ENCODE measurements at regions of chr14 and their contacts with region 1.

Region 1: GRCh38 chr14:50321009-50321660 is 9.0 kb downstream of the DMAC2L start:
- DNase-seq: peak; percentile 79
- H3K4me3 Mint-ChIP-seq: no peak overlapping the region
- H3K27ac Mint-ChIP-seq: no peak overlapping the region
- H3K4me1 Mint-ChIP-seq: peaks cover 22% of the 10 kb centered on the region
- H3K27me3 Mint-ChIP-seq: no peaks in the 10 kb centered on the region

Region 2: DNA sequence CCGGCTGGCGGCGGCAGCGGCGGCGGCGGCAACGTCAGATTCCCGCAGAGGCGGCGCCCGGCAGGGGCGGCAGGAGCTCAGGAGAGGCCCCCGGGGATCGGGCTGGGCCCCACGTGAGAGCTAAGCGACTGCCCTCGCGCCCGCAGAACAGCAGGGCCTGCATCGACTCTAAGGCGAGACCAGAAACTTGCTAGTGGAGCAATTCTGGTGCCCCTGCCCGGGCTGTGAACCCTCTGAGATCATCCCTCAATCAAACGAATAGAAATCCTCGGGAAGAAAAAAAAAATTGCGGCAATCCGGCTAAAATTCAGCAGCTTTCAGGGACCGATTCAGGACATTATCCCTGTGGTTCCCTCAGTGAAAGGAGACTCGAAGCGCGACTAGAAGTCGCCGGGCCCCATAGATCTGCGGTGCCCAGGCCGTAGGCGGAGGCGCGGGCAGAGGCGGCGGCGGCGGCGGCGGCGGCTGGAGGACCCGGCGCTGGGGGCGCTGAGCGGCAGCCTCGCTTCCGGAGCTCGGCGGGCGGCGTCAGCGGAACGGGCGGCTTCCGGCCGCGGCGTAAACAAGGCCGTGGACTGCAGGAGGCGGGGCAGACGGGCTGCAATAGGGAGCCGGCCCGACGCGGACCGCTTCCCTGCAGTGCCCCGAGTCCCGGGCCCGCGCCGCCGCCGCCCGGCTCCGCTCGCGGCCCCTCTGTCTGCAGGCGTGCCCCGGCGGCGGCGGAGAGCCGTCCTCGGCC is 553.4 kb before region 1 on chr14 and contains the start of gene KLHDC2:
- CTCF ChIA-PET with region 1: interaction called, 3 read pairs
- POLR2A ChIA-PET with region 1: no interaction called
- intact Hi-C with region 1: loop called (anchors 10 kb)
- DNase-seq: peak; percentile 94
- H3K4me3 Mint-ChIP-seq: peak within 1 kb of the TSS; percentile 88
- H3K27ac Mint-ChIP-seq: peak within 1 kb of the TSS; percentile 100
- H3K4me1 Mint-ChIP-seq: peaks cover 28% of the 10 kb centered on the region
- H3K27me3 Mint-ChIP-seq: no peaks in the 10 kb centered on the region
- total RNA-seq, gene KLHDC2: 27.8 to 28.2 TPM

Region 3: DNA sequence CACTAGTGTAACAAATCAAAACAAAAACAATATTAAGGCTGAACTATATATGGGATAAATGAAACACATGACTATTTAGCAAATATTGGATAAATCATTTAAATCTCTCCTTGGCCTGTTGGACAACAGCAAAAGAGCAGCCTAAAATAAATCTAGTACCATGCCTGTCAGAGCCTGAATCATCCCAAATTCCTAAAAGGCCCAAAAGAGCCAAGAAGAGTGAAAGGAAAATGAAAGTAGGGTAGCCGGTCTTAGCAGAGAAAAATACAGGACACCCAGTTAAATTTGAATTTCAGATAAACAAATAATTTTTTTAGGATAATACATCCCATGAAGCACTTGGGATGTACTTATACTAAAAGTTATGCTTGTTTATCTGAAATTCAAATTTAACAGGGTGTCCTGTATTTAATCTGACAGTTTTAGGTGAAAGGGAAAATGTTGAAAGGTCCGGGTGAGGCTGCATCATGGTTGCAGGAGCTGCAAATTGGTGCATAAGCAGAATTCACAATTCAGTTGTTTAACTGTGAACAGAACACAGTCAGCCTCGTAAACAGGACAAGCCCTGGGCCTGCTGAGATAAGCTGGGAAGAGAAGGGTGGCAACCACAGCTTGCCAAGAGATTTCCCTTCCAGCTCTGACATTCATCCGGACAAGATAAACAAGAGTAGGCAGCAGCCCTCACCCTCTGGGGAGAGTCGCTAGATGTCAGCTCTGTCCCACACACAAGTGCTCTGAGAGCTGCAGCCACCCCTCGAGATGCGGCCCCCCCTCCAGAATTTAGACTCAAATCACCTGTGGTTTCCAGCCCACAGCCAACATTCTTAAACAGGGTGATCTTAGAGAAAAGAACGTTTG is 21.3 kb after region 1 on chr14:
- CTCF ChIA-PET with region 1: interaction called, 22 read pairs
- POLR2A ChIA-PET with region 1: interaction called, 9 read pairs
- intact Hi-C with region 1: loop called (anchors 1 kb)
- DNase-seq: peak; percentile 56
- H3K4me3 Mint-ChIP-seq: no peak overlapping the region
- H3K27ac Mint-ChIP-seq: no peak overlapping the region
- H3K4me1 Mint-ChIP-seq: peaks cover 22% of the 10 kb centered on the region
- H3K27me3 Mint-ChIP-seq: peaks cover 4% of the 10 kb centered on the region

Region 4: DNA sequence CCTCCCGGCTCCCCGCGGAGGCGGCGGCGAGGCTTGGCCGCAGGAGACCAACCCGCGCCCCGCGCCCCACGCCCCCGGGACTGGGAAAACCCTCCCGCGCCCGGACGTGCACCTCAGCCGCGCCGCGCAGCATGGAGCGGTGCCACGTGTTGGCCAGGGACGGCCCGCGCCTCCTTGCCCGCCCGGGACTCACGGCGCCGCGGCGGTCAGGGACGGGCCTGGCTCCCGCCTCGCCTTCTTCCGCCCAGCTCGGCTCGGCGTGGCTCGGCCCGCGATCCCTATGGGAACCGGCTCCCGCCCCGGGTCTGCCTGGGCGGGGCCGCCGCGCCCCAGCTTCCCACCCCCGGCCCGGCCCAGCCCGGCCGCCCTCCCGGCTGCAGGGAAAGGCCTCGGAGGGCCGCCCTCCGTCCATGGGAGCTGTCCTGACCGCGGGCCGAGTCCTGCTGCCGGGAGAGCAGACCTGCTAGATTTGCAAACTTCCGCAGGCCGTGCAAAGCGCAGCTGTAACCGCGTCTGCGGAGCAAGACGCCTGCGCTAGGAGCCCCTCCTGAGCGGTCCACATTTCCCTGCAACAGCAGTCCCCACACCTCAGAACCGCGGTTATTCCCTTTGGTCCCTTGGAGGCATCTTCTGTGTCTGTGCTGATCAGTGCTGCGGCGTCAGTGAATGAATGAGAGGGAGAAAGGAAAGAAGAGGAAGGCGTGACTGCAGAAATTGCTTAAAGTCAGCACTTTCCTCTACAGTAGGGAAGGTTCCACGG is 75.7 kb after region 1 on chr14 and contains the start of gene CDKL1:
- CTCF ChIA-PET with region 1: interaction called, 15 read pairs
- POLR2A ChIA-PET with region 1: no interaction called
- intact Hi-C with region 1: loop called (anchors 1 kb)
- DNase-seq: peak; percentile 57
- H3K4me3 Mint-ChIP-seq: peak within 1 kb of the TSS; percentile 82
- H3K27ac Mint-ChIP-seq: no peak within 1 kb of the TSS
- H3K4me1 Mint-ChIP-seq: peaks cover 11% of the 10 kb centered on the region
- H3K27me3 Mint-ChIP-seq: peaks cover 4% of the 10 kb centered on the region
- total RNA-seq, gene CDKL1: 2.4 to 3.4 TPM

Region 5: GRCh38 chr14:50520947-50521815 is 200.0 kb after region 1 on chr14:
- CTCF ChIA-PET with region 1: interaction called, 38 read pairs
- POLR2A ChIA-PET with region 1: interaction called, 8 read pairs
- intact Hi-C with region 1: loop called (anchors 1 kb)
- DNase-seq: peak; percentile 84
- H3K4me3 Mint-ChIP-seq: peak overlapping the region; percentile 25
- H3K27ac Mint-ChIP-seq: peak overlapping the region; percentile 85
- H3K4me1 Mint-ChIP-seq: peaks cover 56% of the 10 kb centered on the region
- H3K27me3 Mint-ChIP-seq: no peaks in the 10 kb centered on the region

Region 6: GRCh38 chr14:50726372-50727107 is 405.4 kb after region 1 on chr14:
- CTCF ChIA-PET with region 1: no interaction called
- POLR2A ChIA-PET with region 1: no interaction called
- intact Hi-C with region 1: loop called (anchors 1 kb)
- DNase-seq: peak; percentile 24
- H3K4me3 Mint-ChIP-seq: peak overlapping the region; percentile 45
- H3K27ac Mint-ChIP-seq: peak overlapping the region; percentile 94
- H3K4me1 Mint-ChIP-seq: peaks cover 33% of the 10 kb centered on the region
- H3K27me3 Mint-ChIP-seq: no peaks in the 10 kb centered on the region

Region 7: DNA sequence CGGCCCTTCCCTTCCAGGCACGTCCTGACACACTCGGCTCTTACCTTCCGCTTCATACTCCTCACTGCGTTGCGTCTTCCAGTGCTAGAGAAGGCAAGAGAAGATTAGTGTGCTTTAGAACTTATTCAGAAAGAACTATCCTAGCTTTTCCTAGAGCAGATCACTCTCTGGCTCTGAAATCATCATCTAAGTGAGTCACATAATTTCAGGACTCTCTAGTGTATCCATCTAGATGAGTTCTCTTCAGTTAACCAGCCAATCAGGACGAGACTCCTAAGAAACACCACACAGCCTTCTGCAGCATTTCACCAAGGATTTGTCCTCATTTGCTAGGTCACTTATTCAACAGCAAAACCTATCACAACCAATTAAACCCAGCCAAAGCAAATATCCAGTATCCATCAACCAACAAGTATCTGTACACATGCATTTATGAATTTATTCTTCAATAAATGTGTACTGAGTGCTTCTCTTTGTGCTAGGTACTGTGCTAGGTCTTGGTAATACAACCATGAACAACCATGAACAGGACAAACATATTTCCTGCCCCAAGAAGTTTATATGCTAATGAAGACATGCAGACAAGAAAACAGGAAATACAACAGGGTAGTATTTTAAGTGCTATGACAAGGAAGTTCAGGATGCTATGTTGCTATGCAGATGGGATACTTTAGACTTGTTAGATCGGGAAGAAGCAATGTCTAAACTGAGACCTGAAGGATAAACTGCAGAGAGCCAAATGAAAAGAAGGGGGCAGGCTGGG is 457.8 kb after region 1 on chr14:
- CTCF ChIA-PET with region 1: interaction called, 15 read pairs
- POLR2A ChIA-PET with region 1: no interaction called
- intact Hi-C with region 1: loop called (anchors 2 kb)
- DNase-seq: no peak
- H3K4me3 Mint-ChIP-seq: no peak overlapping the region
- H3K27ac Mint-ChIP-seq: no peak overlapping the region
- H3K4me1 Mint-ChIP-seq: peaks cover 26% of the 10 kb centered on the region
- H3K27me3 Mint-ChIP-seq: no peaks in the 10 kb centered on the region